ENCODE measurements at regions of chr9 and their contacts with region 1.

Region 1: GRCh38 chr9:6566409-6567139 is 79.0 kb downstream of the GLDC start:
- DNase-seq: no peak
- CTCF ChIP-seq: no peak

Region 2: DNA sequence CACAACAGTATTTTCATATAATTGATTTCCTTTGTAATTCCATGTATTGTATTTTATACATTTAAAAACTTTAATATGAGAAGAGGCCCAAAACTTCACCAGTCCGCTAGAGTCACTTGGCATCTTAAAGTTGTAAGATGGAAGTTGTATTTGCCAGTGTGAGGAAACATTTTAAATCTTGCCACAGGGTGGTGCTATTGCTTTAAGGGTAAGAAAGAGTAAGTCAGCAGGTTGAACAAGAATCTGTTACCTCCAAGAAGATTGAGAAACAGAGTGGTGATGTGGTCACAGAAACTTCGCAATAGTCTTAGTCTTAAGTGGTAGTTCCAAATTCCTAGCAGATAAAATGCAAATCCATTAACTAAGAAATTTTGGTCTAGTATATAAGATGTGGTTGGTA is 511.4 kb before region 1 on chr9:
- in situ Hi-C with region 1: loop called (anchors 25 kb)
- DNase-seq: peak; percentile 24
- CTCF ChIP-seq: peak; percentile 38

Region 3: GRCh38 chr9:6353851-6354686 is 212.5 kb before region 1 on chr9:
- in situ Hi-C with region 1: loop called (anchors 5 kb)
- DNase-seq: peak; percentile 76
- CTCF ChIP-seq: peak; percentile 78